ENCODE measurements at regions of chr1 and their contacts with region 1.

Region 1: DNA sequence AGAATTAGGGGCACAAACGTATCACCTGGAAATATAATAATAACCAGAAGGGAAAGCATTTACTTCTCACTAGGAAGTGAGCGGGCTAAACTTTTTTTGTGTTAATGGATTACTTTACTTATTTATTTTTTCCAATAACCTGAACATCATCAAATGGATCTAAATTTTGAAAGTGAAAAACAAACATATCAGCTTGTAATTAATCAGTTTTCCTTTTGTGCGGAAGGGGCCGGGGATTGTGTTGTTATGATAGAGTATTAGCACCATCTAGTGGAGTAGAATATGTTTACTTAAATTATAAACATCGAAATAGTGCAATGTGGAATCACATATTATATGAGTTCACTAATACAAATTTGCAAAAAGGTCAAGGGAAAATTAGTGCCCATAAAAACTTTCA is 9.0 kb downstream of the CFH start:
- DNase-seq: peak; percentile 50
- H3K4me3 ChIP-seq: no peak overlapping the region
- H3K27ac ChIP-seq: no peak overlapping the region
- H3K4me1 ChIP-seq: no peaks in the 10 kb centered on the region
- H3K27me3 ChIP-seq: no peaks in the 10 kb centered on the region
- CTCF ChIP-seq: peak; percentile 48 to 72 (median 56)
- POLR2A ChIP-seq: no peak

Region 2: GRCh38 chr1:196355206-196355786 is 305.6 kb before region 1 on chr1:
- intact Hi-C with region 1: loop called (anchors 10 kb)
- DNase-seq: no peak
- H3K4me3 ChIP-seq: no peak overlapping the region
- H3K27ac ChIP-seq: no peak overlapping the region
- H3K4me1 ChIP-seq: no peaks in the 10 kb centered on the region
- H3K27me3 ChIP-seq: no peaks in the 10 kb centered on the region
- CTCF ChIP-seq: peak in 2 of 3 experiments; percentile 52 to 56
- POLR2A ChIP-seq: no peak

Region 3: DNA sequence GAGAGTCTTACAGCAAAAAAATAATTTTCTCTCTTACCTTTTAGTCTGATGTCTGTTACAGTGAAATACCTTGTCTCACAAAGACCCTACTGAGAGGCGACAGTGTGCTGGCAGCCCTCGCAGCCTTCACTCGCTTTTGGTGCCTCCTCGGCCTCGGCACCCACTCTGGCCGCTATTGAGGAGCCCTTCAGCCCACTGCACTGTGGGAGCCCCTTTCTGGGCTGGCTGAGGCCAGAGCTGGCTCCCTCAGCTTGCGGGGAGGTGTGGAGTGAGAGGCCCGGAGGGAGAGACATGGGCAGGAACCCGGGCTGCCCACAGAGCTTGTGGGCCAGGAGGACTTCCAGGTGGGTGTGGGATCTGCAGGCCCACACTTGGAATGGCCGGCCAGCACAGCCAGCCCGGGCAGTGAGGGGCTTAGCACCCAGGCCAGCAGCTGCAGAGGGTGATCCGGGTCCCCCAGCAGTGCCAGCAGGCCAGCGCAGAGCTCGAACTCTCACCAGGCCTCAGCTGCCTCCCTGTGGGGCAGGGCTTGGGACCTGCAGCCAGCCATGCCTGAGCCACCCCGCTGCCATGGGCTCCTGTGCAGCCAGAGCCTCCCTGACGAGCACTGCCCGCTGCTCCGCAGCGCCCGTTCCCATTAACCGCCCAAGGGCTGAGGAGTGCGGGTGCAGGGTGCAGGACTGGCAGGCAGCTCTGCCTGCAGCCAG is 147.8 kb after region 1 on chr1:
- intact Hi-C with region 1: no loop called
- DNase-seq: no peak
- H3K4me3 ChIP-seq: no peak overlapping the region
- H3K27ac ChIP-seq: no peak overlapping the region
- H3K4me1 ChIP-seq: no peaks in the 10 kb centered on the region
- H3K27me3 ChIP-seq: no peaks in the 10 kb centered on the region
- CTCF ChIP-seq: no peak
- POLR2A ChIP-seq: no peak

Region 4: DNA sequence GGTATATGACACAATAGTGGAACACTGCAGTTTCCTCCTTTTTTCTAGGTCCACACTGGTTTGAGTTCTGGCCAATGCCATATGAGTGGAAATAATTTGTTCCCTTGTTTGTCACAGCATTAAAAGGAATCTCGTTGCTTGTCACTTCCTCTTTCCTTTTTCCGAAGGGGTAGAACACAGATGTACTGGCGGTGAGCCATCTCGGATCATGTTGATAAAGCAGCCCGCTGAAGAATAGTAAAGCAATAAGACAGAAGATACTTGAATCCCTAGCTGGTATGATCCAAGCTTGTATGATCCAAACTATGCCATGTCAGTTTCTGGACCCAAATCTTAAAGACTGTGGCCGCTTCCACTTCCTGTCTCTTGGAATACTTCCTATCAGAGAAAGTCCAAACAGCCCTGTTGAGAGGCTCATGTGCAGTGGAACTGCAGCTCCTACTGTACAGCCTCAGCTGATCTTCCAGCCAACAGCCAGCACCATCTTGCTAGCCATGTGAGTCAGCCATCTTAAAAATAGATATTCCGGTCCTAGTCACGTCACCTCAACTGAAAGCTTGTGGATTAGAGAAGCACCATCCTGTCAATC is 356.8 kb after region 1 on chr1:
- intact Hi-C with region 1: no loop called
- DNase-seq: no peak
- H3K4me3 ChIP-seq: no peak overlapping the region
- H3K27ac ChIP-seq: no peak overlapping the region
- H3K4me1 ChIP-seq: no peaks in the 10 kb centered on the region
- H3K27me3 ChIP-seq: no peaks in the 10 kb centered on the region
- CTCF ChIP-seq: no peak
- POLR2A ChIP-seq: no peak

Measured in testis (tissue), 5 donors.